CD4-positive, alpha-beta memory T cell (primary cell): ENCODE measurements at regions of chr11 and their contacts with region 1.

Region 1: GRCh38 chr11:10307442-10308207 is 2.8 kb downstream of the ADM start:
- DNase-seq: peak; percentile 81 to 86 (median 84)
- H3K4me3 ChIP-seq: peak overlapping the region; percentile 54 to 73
- H3K4me3 Mint-ChIP-seq: peak overlapping the region; percentile 69 to 98 (median 78)
- H3K27ac ChIP-seq: peak overlapping the region; percentile 28
- H3K27ac Mint-ChIP-seq: peak overlapping the region in 6 of 7 donors; percentile 7 to 88 (median 59)
- H3K4me1 ChIP-seq: peaks cover 52% of the 10 kb centered on the region
- H3K4me1 Mint-ChIP-seq: peaks cover 22 to 48% (median 35%) of the 10 kb centered on the region in 4 donors
- H3K27me3 ChIP-seq: peaks cover 19% of the 10 kb centered on the region
- H3K27me3 Mint-ChIP-seq: peaks cover 14 to 21% of the 10 kb centered on the region in 2 donors

Region 2: GRCh38 chr11:9534791-9535781 is 772.5 kb before region 1 on chr11:
- CTCF ChIA-PET with region 1: no interaction called
- POLR2A ChIA-PET with region 1: no interaction called
- intact Hi-C with region 1: loop called (anchors 1 kb)
- DNase-seq: peak; percentile 63 to 73 (median 66)
- H3K4me3 ChIP-seq: no peak overlapping the region
- H3K4me3 Mint-ChIP-seq: no peak overlapping the region
- H3K27ac ChIP-seq: no peak overlapping the region
- H3K27ac Mint-ChIP-seq: peak overlapping the region in 2 of 7 donors; percentile 7 to 43
- H3K4me1 ChIP-seq: no peaks in the 10 kb centered on the region
- H3K4me1 Mint-ChIP-seq: peaks cover 0 to 2% (median 0%) of the 10 kb centered on the region in 4 donors
- H3K27me3 ChIP-seq: no peaks in the 10 kb centered on the region
- H3K27me3 Mint-ChIP-seq: no peaks in the 10 kb centered on the region

Region 3: GRCh38 chr11:9757809-9758636 is 549.6 kb before region 1 on chr11:
- CTCF ChIA-PET with region 1: interaction called, 38 read pairs
- POLR2A ChIA-PET with region 1: interaction called, 12 read pairs
- intact Hi-C with region 1: loop called (anchors 1 kb)
- DNase-seq: peak; percentile 90 to 93 (median 90)
- H3K4me3 ChIP-seq: peak overlapping the region; percentile 44 to 75
- H3K4me3 Mint-ChIP-seq: peak overlapping the region; percentile 76 to 89 (median 84)
- H3K27ac ChIP-seq: peak overlapping the region; percentile 60
- H3K27ac Mint-ChIP-seq: peak overlapping the region; percentile 85 to 91 (median 89)
- H3K4me1 ChIP-seq: peaks cover 16% of the 10 kb centered on the region
- H3K4me1 Mint-ChIP-seq: peaks cover 10 to 25% (median 17%) of the 10 kb centered on the region in 4 donors
- H3K27me3 ChIP-seq: no peaks in the 10 kb centered on the region
- H3K27me3 Mint-ChIP-seq: no peaks in the 10 kb centered on the region

Region 4: DNA sequence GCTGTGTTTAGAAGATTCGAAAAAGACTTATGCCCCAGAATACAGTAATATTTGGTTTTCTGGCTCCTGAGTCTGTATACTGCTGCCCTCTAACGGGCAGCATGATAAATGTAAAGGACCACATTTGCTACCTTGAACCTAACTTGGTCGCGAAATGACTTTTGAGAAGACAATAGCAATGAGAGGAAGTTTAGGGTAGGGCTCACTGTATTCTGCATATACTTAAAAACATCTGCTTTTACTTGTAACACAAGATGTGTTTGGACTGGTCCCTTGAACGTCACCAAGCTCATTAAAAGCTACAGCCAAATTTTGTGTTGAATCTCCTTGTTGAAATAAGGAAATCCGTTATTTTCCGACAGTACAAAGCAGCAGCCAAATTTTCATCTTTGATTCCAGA is 334.6 kb before region 1 on chr11:
- CTCF ChIA-PET with region 1: interaction called, 3 read pairs
- POLR2A ChIA-PET with region 1: no interaction called
- intact Hi-C with region 1: loop called (anchors 1 kb)
- DNase-seq: peak in 4 of 5 donors; percentile 8 to 32 (median 18)
- H3K4me3 ChIP-seq: no peak overlapping the region
- H3K4me3 Mint-ChIP-seq: no peak overlapping the region
- H3K27ac ChIP-seq: no peak overlapping the region
- H3K27ac Mint-ChIP-seq: no peak overlapping the region
- H3K4me1 ChIP-seq: no peaks in the 10 kb centered on the region
- H3K4me1 Mint-ChIP-seq: no peaks in the 10 kb centered on the region
- H3K27me3 ChIP-seq: no peaks in the 10 kb centered on the region
- H3K27me3 Mint-ChIP-seq: no peaks in the 10 kb centered on the region

Region 5: GRCh38 chr11:10255388-10256125 is 52.1 kb before region 1 on chr11:
- CTCF ChIA-PET with region 1: interaction called, 6 read pairs
- POLR2A ChIA-PET with region 1: no interaction called
- intact Hi-C with region 1: loop called (anchors 10 kb)
- DNase-seq: no peak
- H3K4me3 ChIP-seq: no peak overlapping the region
- H3K4me3 Mint-ChIP-seq: no peak overlapping the region
- H3K27ac ChIP-seq: no peak overlapping the region
- H3K27ac Mint-ChIP-seq: no peak overlapping the region
- H3K4me1 ChIP-seq: no peaks in the 10 kb centered on the region
- H3K4me1 Mint-ChIP-seq: peaks cover 2 to 10% (median 7%) of the 10 kb centered on the region in 4 donors
- H3K27me3 ChIP-seq: no peaks in the 10 kb centered on the region
- H3K27me3 Mint-ChIP-seq: no peaks in the 10 kb centered on the region

Region 6: GRCh38 chr11:10322830-10323792 is 15.5 kb after region 1 on chr11:
- CTCF ChIA-PET with region 1: interaction called, 82 read pairs
- POLR2A ChIA-PET with region 1: interaction called, 3 read pairs
- intact Hi-C with region 1: loop called (anchors 1 kb)
- DNase-seq: peak; percentile 48 to 81 (median 50)
- H3K4me3 ChIP-seq: no peak overlapping the region
- H3K4me3 Mint-ChIP-seq: peak overlapping the region in 2 of 8 donors; percentile 3 to 18
- H3K27ac ChIP-seq: no peak overlapping the region
- H3K27ac Mint-ChIP-seq: peak overlapping the region in 3 of 7 donors; percentile 46 to 76 (median 64)
- H3K4me1 ChIP-seq: peaks cover 5% of the 10 kb centered on the region
- H3K4me1 Mint-ChIP-seq: peaks cover 0 to 2% (median under 1%) of the 10 kb centered on the region in 4 donors
- H3K27me3 ChIP-seq: peaks cover 4% of the 10 kb centered on the region
- H3K27me3 Mint-ChIP-seq: peaks cover 8 to 15% of the 10 kb centered on the region in 2 donors